ENCODE measurements at regions of chr1 and their contacts with region 1.

Region 1: GRCh38 chr1:21270086-21270689 is 20.1 kb downstream of the ECE1 start:
- H3K4me3 ChIP-seq: no peak overlapping the region
- H3K27ac ChIP-seq: no peak overlapping the region
- H3K4me1 ChIP-seq: no peaks in the 10 kb centered on the region
- CTCF ChIP-seq: peak; percentile 87

Region 2: GRCh38 chr1:21216835-21217811 is 53.1 kb before region 1 on chr1:
- CTCF ChIA-PET with region 1: interaction called, 13 read pairs
- POLR2A ChIA-PET with region 1: no interaction called
- H3K4me3 ChIP-seq: no peak overlapping the region
- H3K27ac ChIP-seq: no peak overlapping the region
- H3K4me1 ChIP-seq: no peaks in the 10 kb centered on the region
- CTCF ChIP-seq: peak; percentile 36; the same call in 1 of the 2 replicates

Region 3: GRCh38 chr1:21255278-21255942 is 14.8 kb before region 1 on chr1:
- CTCF ChIA-PET with region 1: interaction called, 142 read pairs
- POLR2A ChIA-PET with region 1: interaction called, 3 read pairs
- H3K4me3 ChIP-seq: no peak overlapping the region
- H3K27ac ChIP-seq: no peak overlapping the region
- H3K4me1 ChIP-seq: no peaks in the 10 kb centered on the region
- CTCF ChIP-seq: peak; percentile 80

Region 4: GRCh38 chr1:21302747-21303715 is 32.8 kb after region 1 on chr1:
- CTCF ChIA-PET with region 1: interaction called, 29 read pairs
- POLR2A ChIA-PET with region 1: no interaction called
- H3K4me3 ChIP-seq: no peak overlapping the region
- H3K27ac ChIP-seq: no peak overlapping the region
- H3K4me1 ChIP-seq: peaks cover 8% of the 10 kb centered on the region
- CTCF ChIP-seq: peak; percentile 77

Region 5: DNA sequence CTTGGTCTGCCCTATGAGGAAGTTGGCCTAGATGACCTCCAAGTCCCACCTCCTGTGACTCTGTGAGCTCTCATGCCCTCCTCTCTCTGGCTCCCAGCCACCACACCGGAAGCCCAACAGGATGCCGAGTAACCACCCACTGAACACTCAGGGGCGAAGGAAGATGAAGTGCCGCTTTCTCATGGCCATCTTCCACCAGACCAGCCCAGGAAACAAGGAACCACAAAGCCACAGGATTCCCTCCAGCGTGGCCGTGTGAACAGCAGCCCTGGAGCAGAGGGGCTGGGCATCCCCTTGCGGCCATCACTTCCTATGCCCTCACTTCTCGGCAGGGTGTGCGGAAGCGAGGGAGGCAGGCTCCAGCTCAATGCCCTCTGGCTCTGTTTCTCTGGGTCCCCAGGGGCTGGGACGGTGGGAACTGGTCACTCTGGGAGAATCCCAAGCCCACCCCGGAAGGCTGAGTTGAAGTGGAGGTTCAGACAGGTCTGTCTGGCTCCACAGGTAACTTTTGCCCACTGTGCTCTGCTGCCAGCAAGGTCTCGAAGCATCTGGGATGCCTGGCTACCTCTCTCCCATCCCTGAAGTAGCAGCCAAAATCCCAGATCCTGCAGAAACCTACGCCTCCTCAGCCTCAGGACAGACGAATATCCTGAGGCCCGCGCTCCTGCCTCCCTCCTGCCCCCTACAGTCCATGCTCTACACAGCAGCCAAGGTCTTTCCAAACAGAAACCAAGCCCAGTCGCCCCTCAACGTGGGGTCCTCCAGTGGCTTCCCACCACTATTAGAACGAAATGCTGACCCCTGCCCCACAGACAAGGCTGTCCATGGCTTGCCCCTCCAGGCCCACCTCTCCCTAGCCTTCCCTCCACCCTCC is 64.3 kb after region 1 on chr1:
- CTCF ChIA-PET with region 1: interaction called, 13 read pairs
- POLR2A ChIA-PET with region 1: no interaction called
- H3K4me3 ChIP-seq: no peak overlapping the region
- H3K27ac ChIP-seq: peak overlapping the region; percentile 48; the same call in 1 of the 2 replicates
- H3K4me1 ChIP-seq: peaks cover 38% of the 10 kb centered on the region
- CTCF ChIP-seq: peak; percentile 92

Region 6: DNA sequence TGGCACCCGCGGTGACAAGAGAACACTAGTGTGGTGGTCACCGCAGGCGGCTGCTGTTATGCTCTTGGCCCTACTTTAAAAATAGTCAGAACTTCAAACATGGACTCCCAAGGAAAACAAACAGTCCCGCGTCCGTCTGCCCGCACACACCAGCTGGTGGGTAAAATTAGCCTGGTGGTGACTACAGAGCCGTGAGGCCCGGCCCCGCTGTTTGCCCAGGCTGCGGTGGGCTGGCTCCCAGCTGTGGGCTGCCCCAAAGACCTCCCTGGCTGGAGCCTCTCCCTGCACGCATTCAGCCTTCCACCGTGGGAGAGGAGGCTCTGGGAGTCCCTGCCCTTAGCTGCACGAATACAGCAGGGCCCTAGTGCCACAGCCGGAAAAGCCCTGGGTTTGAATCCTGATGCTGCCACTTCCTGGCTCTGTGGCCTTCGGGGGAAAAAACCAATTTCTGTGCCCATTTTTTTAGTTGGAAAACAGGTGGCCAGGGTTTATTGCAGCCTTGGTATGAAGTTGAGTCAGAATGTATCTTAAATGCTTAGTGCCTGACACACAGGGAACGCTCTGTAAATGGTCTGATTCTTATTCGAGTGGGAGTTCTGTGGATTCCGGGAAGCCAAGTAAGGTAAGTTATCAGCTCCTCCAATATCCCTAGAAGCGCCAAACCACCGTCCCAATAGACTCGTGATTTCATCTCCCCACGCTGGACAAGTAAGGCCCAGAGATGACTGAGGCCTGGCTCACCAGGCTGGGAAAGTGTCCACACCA is 297.2 kb after region 1 on chr1:
- CTCF ChIA-PET with region 1: no interaction called
- POLR2A ChIA-PET with region 1: no interaction called
- H3K4me3 ChIP-seq: no peak overlapping the region
- H3K27ac ChIP-seq: no peak overlapping the region
- H3K4me1 ChIP-seq: no peaks in the 10 kb centered on the region
- CTCF ChIP-seq: no peak

Measured in HEK293 (cell line).